ENCODE measurements at regions of chrX and their contacts with region 1.

Region 1: DNA sequence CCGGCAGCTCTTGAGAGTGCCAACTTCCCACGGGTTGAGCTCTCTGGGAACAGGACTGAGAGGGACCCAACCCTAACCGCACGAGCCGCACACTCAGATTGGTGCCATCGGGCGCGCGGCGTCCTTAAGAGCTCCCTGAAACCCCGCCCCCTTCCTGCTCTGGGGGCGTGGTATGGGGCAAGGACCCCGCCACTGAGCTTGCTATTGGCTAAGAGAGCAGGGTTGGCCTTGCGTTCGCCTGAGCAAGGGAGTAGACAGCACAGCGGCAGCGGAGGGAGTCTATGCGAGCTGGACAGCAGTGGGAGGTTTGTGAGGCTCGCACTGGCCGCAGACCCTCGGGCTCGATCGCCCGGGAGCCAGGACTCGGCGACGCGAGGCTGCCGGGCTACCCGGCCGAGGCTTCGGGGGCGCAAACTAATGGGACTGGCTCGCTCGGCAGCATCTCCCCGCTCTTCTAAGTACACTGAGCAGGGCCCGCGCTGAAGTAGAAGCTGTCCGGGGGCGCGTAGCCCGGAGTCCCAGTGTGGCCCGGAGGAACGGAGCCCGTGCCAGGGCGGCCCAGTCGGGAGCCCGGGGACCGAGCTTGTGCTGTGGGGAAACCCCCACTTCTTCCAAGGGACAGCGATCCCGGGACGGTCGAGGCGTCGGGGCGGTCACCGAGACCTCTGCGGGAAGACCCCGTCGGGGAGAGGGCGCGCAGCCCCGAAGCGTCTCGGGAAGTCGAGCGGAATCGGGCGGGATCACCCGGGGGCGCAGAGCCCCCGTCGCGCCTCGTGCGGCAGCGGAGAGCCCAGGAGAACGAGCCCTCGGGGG is at the start of gene EFNB1:
- DNase-seq: peak; percentile 96 to 97
- H3K4me3 ChIP-seq: peak within 1 kb of the TSS; percentile 99
- H3K4me1 ChIP-seq: peaks cover 12% of the 10 kb centered on the region
- H3K27me3 ChIP-seq: no peaks in the 10 kb centered on the region

Region 2: DNA sequence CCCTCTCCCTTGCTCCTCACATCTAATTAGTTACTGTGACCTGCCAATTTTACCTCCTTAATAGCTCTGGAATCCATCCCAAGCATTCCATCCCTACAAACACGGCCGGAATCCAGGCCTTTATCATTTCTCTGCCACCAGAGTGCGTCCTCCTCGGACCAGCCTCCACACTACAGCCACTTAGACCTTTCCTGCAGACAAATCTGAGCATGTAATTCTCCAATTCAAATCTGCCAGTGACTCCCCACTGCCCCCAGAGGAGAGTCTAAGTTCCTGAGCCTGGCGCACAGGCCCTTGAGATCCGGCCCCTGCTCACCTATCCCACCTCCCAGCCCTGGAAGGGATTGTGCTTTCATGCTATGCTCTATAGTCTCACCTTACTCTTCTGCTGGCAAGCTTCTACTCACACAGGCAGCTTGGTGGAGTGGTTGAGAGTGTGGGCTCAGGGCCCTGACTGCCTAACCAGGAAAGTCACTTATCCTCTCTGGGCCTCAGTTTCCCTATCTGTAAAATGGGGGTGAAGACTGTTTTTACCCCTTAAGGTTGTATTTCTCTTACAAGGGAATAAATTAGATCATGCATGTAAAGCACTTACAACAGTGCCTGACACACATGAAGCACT is 305.1 kb after region 1 on chrX:
- in situ Hi-C with region 1: loop called (anchors 10 kb)
- DNase-seq: peak; percentile 91 to 94
- H3K4me3 ChIP-seq: no peak overlapping the region
- H3K4me1 ChIP-seq: peaks cover 76% of the 10 kb centered on the region
- H3K27me3 ChIP-seq: no peaks in the 10 kb centered on the region

Region 3: GRCh38 chrX:69216911-69217310 is 388.0 kb after region 1 on chrX:
- in situ Hi-C with region 1: loop called (anchors 5 kb)
- DNase-seq: no peak
- H3K4me3 ChIP-seq: no peak overlapping the region
- H3K4me1 ChIP-seq: peaks cover 8% of the 10 kb centered on the region
- H3K27me3 ChIP-seq: no peaks in the 10 kb centered on the region

Region 4: DNA sequence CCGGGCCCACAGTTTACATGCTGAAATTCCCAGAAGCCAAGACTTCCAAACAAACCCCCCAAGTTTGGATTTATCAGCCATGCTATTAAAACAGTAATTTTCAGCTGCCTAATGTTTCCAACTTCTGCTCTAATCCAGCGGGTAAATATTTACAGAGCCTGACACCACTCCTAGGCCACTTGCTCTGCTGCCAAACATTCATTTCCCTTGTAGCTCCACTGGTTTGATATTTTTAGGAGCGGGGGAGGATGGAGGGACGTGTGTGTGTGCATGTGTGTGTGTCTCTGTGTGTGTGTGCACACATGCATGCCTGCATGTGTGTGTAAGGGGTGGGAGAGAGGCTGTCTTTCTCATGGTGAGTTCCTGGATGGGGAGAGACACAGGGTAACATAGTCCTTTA is 452.0 kb after region 1 on chrX:
- in situ Hi-C with region 1: loop called (anchors 5 kb)
- DNase-seq: no peak
- H3K4me3 ChIP-seq: no peak overlapping the region
- H3K4me1 ChIP-seq: peaks cover 86% of the 10 kb centered on the region
- H3K27me3 ChIP-seq: no peaks in the 10 kb centered on the region

Region 5: DNA sequence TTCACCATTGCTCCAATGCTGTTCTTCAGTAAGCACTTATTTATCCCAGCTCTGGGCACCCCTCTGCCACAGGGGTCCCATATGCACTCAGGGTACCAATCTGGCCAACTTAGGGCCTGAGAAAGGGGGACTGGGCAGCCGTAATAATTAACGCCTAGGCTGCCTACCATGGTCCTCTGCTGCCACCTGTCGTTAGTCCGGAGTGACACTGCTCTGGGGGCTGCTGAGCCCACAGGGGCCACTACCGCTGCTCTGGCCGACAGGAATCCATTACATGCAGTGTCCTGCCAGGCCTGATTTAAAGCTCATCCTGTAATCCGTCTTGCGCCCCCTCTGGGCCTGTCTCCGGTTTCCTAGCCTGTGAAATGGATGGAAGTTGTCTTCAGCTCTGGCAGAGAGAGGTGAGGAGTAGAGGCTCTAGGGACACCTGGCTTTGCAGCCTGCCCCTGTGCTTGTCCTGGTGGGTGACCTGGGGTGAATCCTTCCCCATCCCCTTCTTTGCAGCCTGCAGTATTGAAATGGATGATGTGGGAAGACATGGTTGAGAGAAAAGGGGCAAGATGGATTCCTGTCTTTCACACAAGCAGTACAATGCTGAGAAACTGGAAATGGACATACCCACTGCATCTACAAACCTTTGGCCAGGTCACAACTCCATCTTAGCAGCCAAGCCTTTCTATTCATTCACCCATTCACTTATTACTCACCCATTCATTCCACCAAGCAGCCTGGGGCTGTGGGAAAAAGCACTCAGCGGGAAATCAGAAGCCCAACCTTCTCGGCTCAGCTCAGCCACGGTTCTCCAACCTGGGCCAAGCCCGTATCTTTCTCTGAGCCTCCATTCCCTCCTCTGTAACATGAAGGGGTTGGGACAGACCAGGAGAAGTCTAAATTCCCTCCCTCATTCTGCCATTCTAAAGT is 558.9 kb after region 1 on chrX:
- in situ Hi-C with region 1: loop called (anchors 5 kb)
- DNase-seq: peak; percentile 75 to 92
- H3K4me3 ChIP-seq: no peak overlapping the region
- H3K4me1 ChIP-seq: peaks cover 6% of the 10 kb centered on the region
- H3K27me3 ChIP-seq: no peaks in the 10 kb centered on the region

Measured in HAP-1 (cell line).